Psoas muscle (tissue), 8 donors: ENCODE measurements at regions of chr17 and their contacts with region 1.

Region 1: GRCh38 chr17:18141210-18141803 is 32.8 kb downstream of the MYO15A start:
- DNase-seq: no peak
- ATAC-seq: peak in 3 of 4 donors; percentile 41 to 72 (median 50)
- H3K4me3 ChIP-seq: no peak overlapping the region
- H3K27ac ChIP-seq: no peak overlapping the region
- H3K4me1 ChIP-seq: no peaks in the 10 kb centered on the region
- H3K27me3 ChIP-seq: no peaks in the 10 kb centered on the region
- CTCF ChIP-seq: peak; percentile 62

Region 2: DNA sequence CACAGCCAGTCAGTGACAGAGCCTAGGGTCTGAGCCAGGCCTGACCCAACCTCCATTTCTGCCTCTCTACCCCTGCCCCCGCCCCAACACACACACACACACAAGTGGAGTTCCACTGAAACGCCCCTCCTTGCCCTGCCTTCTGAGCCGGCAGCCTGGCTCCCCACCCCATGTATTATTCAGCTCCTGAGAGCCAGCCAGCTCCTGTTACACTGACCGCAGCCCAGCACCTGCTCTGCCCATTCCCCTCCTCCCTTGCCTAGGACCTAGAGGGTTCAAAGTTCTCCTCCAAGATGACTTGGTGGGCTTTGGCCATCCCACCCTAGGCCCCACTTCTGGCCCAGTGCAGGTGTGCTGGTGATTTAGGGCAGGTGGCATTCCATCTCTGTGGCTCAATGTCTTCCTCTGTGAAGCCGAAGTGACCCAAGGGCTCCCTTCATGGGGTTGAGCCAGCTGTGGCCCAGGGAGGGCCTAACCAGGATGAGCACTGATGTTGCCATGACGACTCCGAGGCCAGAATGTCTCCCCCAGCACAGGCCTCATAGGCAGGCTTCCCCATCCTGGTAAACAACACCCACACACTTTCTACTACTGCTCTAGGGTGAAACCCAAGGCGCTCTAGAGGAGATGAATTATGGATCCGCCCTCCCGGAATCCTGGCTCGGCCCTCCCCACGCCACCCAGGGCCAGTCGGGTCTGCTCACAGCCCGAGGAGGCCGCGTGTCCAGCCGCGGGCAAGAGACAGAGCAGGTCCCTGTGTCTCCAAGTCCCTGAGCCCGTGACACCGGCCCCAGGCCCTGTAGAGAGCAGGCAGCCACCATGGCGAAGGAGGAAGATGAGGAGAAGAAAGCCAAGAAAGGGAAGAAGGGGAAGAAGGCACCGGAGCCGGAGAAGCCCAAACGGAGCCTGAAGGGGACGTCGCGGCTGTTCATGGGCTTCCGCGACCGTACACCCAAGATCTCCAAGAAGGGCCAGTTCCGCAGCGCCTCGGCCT is 23.0 kb before region 1 on chr17:
- intact Hi-C with region 1: no loop called
- DNase-seq: no peak
- ATAC-seq: peak; percentile 62 to 84 (median 76)
- H3K4me3 ChIP-seq: no peak overlapping the region
- H3K27ac ChIP-seq: peak overlapping the region; percentile 68
- H3K4me1 ChIP-seq: peaks cover 22% of the 10 kb centered on the region
- H3K27me3 ChIP-seq: no peaks in the 10 kb centered on the region
- CTCF ChIP-seq: no peak

Region 3: GRCh38 chr17:18183334-18184142 is 42.2 kb after region 1 on chr17 and contains the start of gene ALKBH5:
- intact Hi-C with region 1: loop called in 1 of 2 experiments (anchors 5 kb)
- DNase-seq: peak; percentile 96 to 98
- ATAC-seq: peak; percentile 88 to 93 (median 91)
- H3K4me3 ChIP-seq: peak within 1 kb of the TSS; percentile 96
- H3K27ac ChIP-seq: peak within 1 kb of the TSS; percentile 96
- H3K4me1 ChIP-seq: peaks cover 29% of the 10 kb centered on the region
- H3K27me3 ChIP-seq: no peaks in the 10 kb centered on the region
- CTCF ChIP-seq: peak; percentile 14
- total RNA-seq, gene ALKBH5: 202 to 219 (median 211) TPM

Region 4: GRCh38 chr17:18217412-18218015 is 76.2 kb after region 1 on chr17:
- intact Hi-C with region 1: loop called (anchors 5 to 10 kb)
- DNase-seq: peak; percentile 77 to 89
- ATAC-seq: peak; percentile 91 to 94 (median 92)
- H3K4me3 ChIP-seq: no peak overlapping the region
- H3K27ac ChIP-seq: no peak overlapping the region
- H3K4me1 ChIP-seq: peaks cover 6% of the 10 kb centered on the region
- H3K27me3 ChIP-seq: no peaks in the 10 kb centered on the region
- CTCF ChIP-seq: peak; percentile 93